SK-N-SH (cell line): ENCODE measurements at regions of chr19 and their contacts with region 1.

Region 1: DNA sequence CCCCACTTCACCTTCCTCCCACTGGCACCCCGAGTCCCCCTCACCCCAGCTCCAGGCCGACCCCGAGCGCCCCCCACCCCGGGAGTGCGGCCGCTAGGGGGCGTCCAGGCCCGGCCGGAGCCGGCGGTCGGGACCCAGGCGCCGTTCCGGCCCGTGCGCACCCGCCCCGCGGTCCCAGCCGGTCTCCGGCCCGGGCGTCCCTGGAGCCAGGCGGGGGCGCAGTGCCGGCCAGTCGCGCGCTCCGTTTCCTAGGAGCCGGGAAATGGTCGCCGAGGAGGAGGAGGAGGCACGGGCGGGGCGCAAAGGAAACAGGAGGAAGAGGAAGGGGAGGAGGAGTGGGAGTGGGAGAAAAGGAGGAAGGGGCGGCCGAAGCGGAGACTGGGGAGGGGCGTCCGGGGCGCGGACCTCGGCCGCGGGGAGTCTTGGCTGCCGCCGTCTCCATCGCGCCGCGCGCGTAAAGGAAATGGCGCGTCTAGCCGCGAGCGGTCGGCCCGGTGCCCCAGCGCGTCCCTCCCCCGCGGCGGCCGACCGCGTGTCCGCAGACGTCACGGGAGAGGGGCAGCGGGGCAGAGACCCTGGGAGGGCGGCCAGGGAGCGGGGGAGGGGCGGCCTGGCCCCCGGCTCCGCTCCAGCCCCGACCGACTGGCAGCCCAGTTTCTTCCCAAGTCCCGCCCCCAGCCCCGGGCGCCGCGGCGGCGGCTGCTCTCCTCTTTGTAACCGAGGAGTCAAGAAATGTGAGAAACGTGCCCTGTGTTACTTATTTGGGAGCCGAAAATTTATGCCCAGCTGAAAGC is 1.1 kb upstream of the KCTD15 start:
- DNase-seq: peak; percentile 96
- H3K4me3 ChIP-seq: peak overlapping the region; percentile 49 to 69
- H3K27ac ChIP-seq: peak overlapping the region; percentile 80 to 82
- H3K4me1 ChIP-seq: peaks cover 0 to 37% of the 10 kb centered on the region in 2 experiments; a peak in 2 of 4 replicates
- H3K27me3 ChIP-seq: no peaks in the 10 kb centered on the region
- CTCF ChIP-seq: peak; percentile 90; the same call in 1 of the 2 replicates
- EP300 ChIP-seq: no peak
- RAD21 ChIP-seq: peak; percentile 55; the same call in 1 of the 2 replicates

Region 2: GRCh38 chr19:33808399-33808798 is 12.8 kb after region 1 on chr19:
- CTCF ChIA-PET with region 1: interaction called, 40 read pairs
- POLR2A ChIA-PET with region 1: interaction called, 10 read pairs
- DNase-seq: no peak
- H3K4me3 ChIP-seq: no peak overlapping the region
- H3K27ac ChIP-seq: no peak overlapping the region
- H3K4me1 ChIP-seq: peaks cover 0 to 23% of the 10 kb centered on the region in 2 experiments; a peak in 1 of 4 replicates
- H3K27me3 ChIP-seq: no peaks in the 10 kb centered on the region
- CTCF ChIP-seq: no peak
- EP300 ChIP-seq: no peak
- RAD21 ChIP-seq: no peak

Region 3: GRCh38 chr19:33862981-33863380 is 67.4 kb after region 1 on chr19:
- CTCF ChIA-PET with region 1: interaction called, 14 read pairs
- POLR2A ChIA-PET with region 1: interaction called, 24 read pairs
- DNase-seq: peak; percentile 83
- H3K4me3 ChIP-seq: no peak overlapping the region
- H3K27ac ChIP-seq: peak overlapping the region in 1 of 2 experiments; percentile 56; a peak in 2 of 4 replicates
- H3K4me1 ChIP-seq: peaks cover 0 to 27% of the 10 kb centered on the region in 2 experiments; a peak in 1 of 4 replicates
- H3K27me3 ChIP-seq: no peaks in the 10 kb centered on the region
- CTCF ChIP-seq: no peak
- EP300 ChIP-seq: peak in 1 of 2 experiments; percentile 69; a peak in 2 of 4 replicates
- RAD21 ChIP-seq: no peak; the same call in 1 of the 2 replicates

Region 4: DNA sequence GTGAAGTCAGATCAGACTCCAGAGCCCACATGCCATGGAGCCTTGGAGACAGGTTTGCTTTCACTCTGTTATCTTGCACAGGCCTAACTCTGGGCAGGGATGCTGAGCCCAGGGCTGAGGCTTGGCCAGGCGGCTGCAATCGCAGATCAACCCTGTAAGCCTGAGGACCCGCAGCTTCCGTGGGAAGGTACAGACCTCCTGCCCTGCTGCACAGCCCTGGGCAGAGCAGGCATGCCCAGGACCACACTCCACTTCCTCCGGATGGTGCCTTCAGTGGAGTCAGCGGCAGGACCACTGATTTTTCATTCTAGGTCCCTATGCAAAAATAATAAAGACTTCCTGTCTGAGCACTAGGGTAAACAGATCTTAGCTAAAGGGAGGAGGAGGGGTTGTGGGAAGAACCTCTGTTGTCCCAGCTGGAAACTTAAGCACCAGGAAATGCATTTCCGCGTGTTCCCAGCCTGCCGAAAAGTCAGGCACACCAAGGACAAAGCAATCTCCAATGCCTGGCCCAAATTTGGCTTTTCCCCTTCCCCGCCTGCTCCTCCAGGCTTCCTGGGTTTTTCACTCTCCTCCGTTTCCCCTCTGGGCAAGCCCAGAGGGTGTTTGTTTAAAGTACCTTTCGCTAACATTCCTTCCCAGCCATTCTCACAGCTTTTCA is 88.4 kb after region 1 on chr19:
- CTCF ChIA-PET with region 1: interaction called, 9 read pairs
- POLR2A ChIA-PET with region 1: interaction called, 15 read pairs
- DNase-seq: peak; percentile 80
- H3K4me3 ChIP-seq: no peak overlapping the region
- H3K27ac ChIP-seq: peak overlapping the region in 1 of 2 experiments; percentile 85; a peak in 2 of 4 replicates
- H3K4me1 ChIP-seq: peaks cover 0 to 29% of the 10 kb centered on the region in 2 experiments; a peak in 1 of 4 replicates
- H3K27me3 ChIP-seq: no peaks in the 10 kb centered on the region
- CTCF ChIP-seq: no peak
- EP300 ChIP-seq: peak in 1 of 2 experiments; percentile 51; a peak in 1 of 4 replicates
- RAD21 ChIP-seq: no peak

Region 5: DNA sequence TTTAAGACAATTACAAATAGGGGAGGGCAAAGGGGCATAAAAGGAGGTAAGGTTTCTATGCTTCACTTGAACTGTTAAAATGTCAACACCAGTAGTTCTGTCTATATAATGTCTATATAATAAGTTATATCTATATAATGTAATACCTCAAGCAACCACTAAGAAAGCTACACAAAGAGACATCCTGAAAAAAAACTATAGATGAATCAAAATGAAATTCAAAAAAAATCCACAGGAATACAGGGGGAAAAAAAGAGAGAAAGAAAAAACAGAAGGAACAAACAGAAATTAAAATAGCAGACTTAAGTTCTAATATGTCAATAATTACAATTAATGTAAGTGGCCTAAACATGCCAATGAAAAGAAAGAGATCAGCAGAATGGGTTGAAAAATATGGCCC is 187.1 kb after region 1 on chr19:
- CTCF ChIA-PET with region 1: interaction called, 11 read pairs
- POLR2A ChIA-PET with region 1: interaction called, 3 read pairs
- DNase-seq: no peak
- H3K4me3 ChIP-seq: no peak overlapping the region
- H3K27ac ChIP-seq: no peak overlapping the region
- H3K4me1 ChIP-seq: peaks cover 0 to 12% of the 10 kb centered on the region in 2 experiments; a peak in 2 of 4 replicates
- H3K27me3 ChIP-seq: no peaks in the 10 kb centered on the region
- CTCF ChIP-seq: no peak
- EP300 ChIP-seq: no peak
- RAD21 ChIP-seq: no peak